Esophagus muscularis mucosa (tissue), 4 donors: ENCODE measurements at regions of chr15 and their contacts with region 1.

Region 1: DNA sequence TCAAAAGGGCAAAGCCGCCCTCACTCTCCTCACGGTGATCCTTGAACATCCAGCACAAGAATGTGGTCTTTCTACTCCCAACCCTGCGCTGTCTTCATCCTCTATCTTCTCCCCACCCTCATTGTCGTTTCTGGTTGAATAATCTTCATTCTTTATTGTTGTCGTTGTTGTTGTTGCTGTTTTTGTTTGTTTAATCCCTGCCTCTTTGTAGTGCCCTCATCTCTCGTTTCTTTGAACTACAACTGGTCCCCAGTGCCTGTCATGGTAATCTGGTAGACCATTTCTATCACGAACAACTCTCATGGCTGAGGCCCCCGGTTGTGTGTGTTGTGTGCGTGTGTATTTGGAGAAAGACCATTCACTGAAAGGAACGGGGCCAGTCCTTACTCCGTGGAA is 1.2 kb upstream of the MYO5A start:
- DNase-seq: no peak
- H3K4me3 ChIP-seq: peak overlapping the region; percentile 82 to 91 (median 88)
- H3K27ac ChIP-seq: peak overlapping the region in 3 of 4 donors; percentile 86 to 90 (median 90)
- H3K4me1 ChIP-seq: peaks cover 6 to 23% (median 21%) of the 10 kb centered on the region in 4 donors
- H3K27me3 ChIP-seq: peaks cover 0 to 5% (median 0%) of the 10 kb centered on the region in 4 donors
- CTCF ChIP-seq: no peak
- EP300 ChIP-seq: no peak
- POLR2A ChIP-seq: no peak

Region 2: GRCh38 chr15:52256366-52256765 is 273.6 kb before region 1 on chr15:
- intact Hi-C with region 1: no loop called
- DNase-seq: peak; percentile 96
- H3K4me3 ChIP-seq: no peak overlapping the region
- H3K27ac ChIP-seq: no peak overlapping the region
- H3K4me1 ChIP-seq: peaks cover 17 to 22% (median 20%) of the 10 kb centered on the region in 4 donors
- H3K27me3 ChIP-seq: no peaks in the 10 kb centered on the region
- CTCF ChIP-seq: peak; percentile 78 to 81 (median 79)
- EP300 ChIP-seq: no peak
- POLR2A ChIP-seq: no peak

Region 3: GRCh38 chr15:52408823-52409222 is 121.1 kb before region 1 on chr15:
- intact Hi-C with region 1: no loop called
- DNase-seq: no peak
- H3K4me3 ChIP-seq: no peak overlapping the region
- H3K27ac ChIP-seq: no peak overlapping the region
- H3K4me1 ChIP-seq: no peaks in the 10 kb centered on the region
- H3K27me3 ChIP-seq: no peaks in the 10 kb centered on the region
- CTCF ChIP-seq: no peak
- EP300 ChIP-seq: no peak
- POLR2A ChIP-seq: no peak

Region 4: DNA sequence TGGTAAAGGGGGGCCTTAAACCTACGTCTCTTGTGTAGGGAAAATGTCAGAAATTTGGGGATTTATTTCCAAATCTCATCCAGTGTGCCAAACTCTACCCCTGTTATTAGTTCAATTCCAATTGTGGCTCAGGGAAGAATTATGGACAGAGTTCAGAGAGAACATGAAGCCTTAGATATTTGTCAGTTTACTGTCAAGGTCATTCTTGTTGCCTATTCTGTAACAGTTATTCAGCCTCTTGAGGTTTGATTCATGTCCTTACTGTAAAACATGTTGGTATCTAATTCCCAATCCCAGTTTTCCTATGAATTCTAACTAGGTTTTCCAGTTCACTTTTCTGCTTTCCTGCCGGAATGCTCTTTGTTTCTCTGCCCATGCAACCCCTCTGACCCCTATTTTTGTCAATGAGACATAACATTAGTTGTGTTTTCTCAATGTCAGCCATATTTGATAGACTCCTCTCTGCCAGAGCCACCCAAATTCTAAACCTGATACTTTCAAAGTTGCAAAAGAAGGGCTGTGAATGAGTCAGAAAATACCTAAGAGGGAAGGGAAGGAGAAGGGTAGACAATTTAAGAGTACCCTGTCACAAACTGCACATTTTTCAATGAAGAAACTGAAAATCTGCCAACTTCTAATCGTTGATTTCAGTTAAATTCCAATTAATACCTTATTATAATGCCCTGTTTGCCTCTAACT is 96.9 kb after region 1 on chr15:
- intact Hi-C with region 1: no loop called
- DNase-seq: no peak
- H3K4me3 ChIP-seq: no peak overlapping the region
- H3K27ac ChIP-seq: no peak overlapping the region
- H3K4me1 ChIP-seq: peaks cover 0 to 6% (median 3%) of the 10 kb centered on the region in 4 donors
- H3K27me3 ChIP-seq: no peaks in the 10 kb centered on the region
- CTCF ChIP-seq: no peak
- EP300 ChIP-seq: no peak
- POLR2A ChIP-seq: no peak

Region 5: GRCh38 chr15:52730173-52730572 is 200.2 kb after region 1 on chr15:
- intact Hi-C with region 1: loop called (anchors 5 kb)
- DNase-seq: no peak
- H3K4me3 ChIP-seq: no peak overlapping the region
- H3K27ac ChIP-seq: no peak overlapping the region
- H3K4me1 ChIP-seq: peaks cover 0 to 20% (median 6%) of the 10 kb centered on the region in 4 donors
- H3K27me3 ChIP-seq: no peaks in the 10 kb centered on the region
- CTCF ChIP-seq: no peak
- EP300 ChIP-seq: no peak
- POLR2A ChIP-seq: no peak

Region 6: DNA sequence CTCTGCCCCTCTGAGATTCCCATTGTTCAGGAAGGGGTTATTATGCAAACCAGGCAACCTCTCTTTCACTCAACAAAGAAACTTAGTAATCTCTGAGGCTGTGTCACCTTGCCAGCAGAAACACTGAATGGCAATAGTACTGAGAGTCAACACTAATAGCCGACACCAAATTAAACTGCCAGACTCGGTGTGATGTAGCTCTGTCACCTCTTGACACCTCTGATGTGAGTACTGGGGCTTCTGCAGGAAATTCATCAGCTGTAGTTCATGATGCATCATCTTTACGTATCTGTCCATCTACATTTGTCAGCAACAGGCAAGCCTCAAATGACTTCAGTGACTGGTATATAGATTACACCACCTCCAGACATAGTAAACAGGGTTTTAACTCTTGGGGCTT is 325.2 kb after region 1 on chr15:
- intact Hi-C with region 1: no loop called
- DNase-seq: no peak
- H3K4me3 ChIP-seq: no peak overlapping the region
- H3K27ac ChIP-seq: no peak overlapping the region
- H3K4me1 ChIP-seq: no peaks in the 10 kb centered on the region
- H3K27me3 ChIP-seq: peaks cover 0 to 38% (median 6%) of the 10 kb centered on the region in 4 donors
- CTCF ChIP-seq: no peak
- EP300 ChIP-seq: no peak
- POLR2A ChIP-seq: no peak